ENCODE measurements at regions of chr3 and their contacts with region 1.

Region 1: GRCh38 chr3:127598841-127599570 is 795 bp downstream of the MCM2 start:
- DNase-seq: no peak
- H3K4me3 Mint-ChIP-seq: peak overlapping the region; percentile 89
- H3K27ac Mint-ChIP-seq: peak overlapping the region; percentile 85
- H3K4me1 Mint-ChIP-seq: peaks cover 53% of the 10 kb centered on the region
- H3K27me3 Mint-ChIP-seq: no peaks in the 10 kb centered on the region

Region 2: GRCh38 chr3:127580327-127581060 is 18.5 kb before region 1 on chr3:
- CTCF ChIA-PET with region 1: interaction called, 30 read pairs
- POLR2A ChIA-PET with region 1: interaction called, 16 read pairs
- DNase-seq: no peak
- H3K4me3 Mint-ChIP-seq: no peak overlapping the region
- H3K27ac Mint-ChIP-seq: peak overlapping the region; percentile 3
- H3K4me1 Mint-ChIP-seq: peaks cover 2% of the 10 kb centered on the region
- H3K27me3 Mint-ChIP-seq: no peaks in the 10 kb centered on the region

Region 3: GRCh38 chr3:127628788-127629466 is 29.9 kb after region 1 on chr3 and contains the start of gene PODXL2:
- CTCF ChIA-PET with region 1: no interaction called
- POLR2A ChIA-PET with region 1: interaction called, 17 read pairs
- DNase-seq: peak; percentile 21
- H3K4me3 Mint-ChIP-seq: peak within 1 kb of the TSS; percentile 68
- H3K27ac Mint-ChIP-seq: no peak within 1 kb of the TSS
- H3K4me1 Mint-ChIP-seq: peaks cover 25% of the 10 kb centered on the region
- H3K27me3 Mint-ChIP-seq: peaks cover 58% of the 10 kb centered on the region
- total RNA-seq, gene PODXL2: 0.95 to 1.1 TPM